GM12878 (cell line): ENCODE measurements at regions of chr10 and their contacts with region 1.

Region 1: DNA sequence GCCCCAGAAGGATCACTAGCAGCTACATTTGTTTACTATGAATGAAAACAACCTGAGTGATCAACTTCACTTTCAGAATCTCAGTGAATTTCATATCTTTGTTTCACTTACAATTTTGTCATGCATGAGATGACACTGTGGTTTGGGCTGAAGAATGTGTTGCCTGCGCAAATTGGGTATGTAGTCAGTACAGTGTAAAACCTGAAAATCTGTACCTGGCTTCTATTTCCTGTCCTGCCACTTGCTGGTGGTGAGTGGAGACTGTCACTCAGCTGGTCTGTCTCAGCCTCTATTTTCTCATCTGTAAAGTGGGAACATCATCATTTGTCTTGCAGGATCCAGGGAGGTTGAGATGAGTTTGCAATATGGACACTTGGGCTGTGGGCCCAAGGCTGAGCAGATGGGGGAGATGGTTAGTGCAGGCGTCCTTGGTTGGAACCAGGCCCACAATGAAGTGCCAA is 118.0 kb downstream of the WDFY4 start:
- DNase-seq: peak; percentile 95
- ATAC-seq: peak; percentile 94
- H3K4me3 ChIP-seq: no peak overlapping the region
- H3K27ac ChIP-seq: peak overlapping the region; percentile 43
- H3K4me1 ChIP-seq: peaks cover 50% of the 10 kb centered on the region
- H3K27me3 ChIP-seq: no peaks in the 10 kb centered on the region
- CTCF ChIP-seq: no peak; a peak in 1 of 6 replicates
- EP300 ChIP-seq: peak; percentile 77 to 92; a peak in 3 of 4 replicates
- POLR2A ChIP-seq: no peak
- RAD21 ChIP-seq: no peak

Region 2: DNA sequence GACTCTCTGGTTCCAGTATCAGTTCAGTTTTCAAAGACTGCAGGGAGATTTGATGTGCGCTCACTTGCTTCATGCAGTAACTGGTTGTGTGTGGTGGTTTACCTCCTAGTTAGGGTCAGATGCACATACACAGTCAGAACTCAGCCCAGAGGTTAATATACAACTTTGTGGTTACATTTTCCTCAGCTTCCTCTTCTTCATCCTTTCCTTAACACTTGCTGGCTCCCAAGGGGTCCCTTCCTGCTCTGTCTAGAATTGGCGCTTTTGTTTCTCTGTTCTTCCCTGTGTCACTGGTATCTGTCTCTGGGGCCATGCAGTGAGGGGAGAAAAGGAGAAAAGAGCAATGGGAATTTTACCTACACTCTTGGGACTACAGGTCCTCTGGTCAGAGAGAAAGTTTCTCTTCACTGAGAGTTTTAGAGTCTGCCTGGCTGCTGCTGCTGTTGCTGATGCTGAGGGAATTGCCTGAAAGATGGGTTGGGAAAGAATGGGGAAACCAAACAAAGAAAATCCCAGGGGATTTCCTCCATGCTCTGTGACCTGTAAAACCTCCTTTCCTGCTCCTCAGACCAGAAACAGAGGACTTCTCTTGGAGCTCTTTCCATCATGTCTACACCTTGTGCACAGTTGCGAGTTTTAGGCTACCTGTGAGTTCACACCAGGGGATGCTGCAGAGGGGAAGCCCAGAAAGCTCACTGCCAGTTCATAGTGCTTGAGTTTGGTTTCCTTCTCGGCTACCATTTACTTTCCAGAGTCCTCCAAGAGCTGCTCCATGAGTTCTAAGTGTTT is 43.3 kb before region 1 on chr10:
- CTCF ChIA-PET with region 1: interaction called, 35 read pairs
- POLR2A ChIA-PET with region 1: interaction called, 4 read pairs
- RAD21 ChIA-PET with region 1: interaction called, 12 read pairs
- SMC1A ChIA-PET with region 1: interaction called, 54 read pairs
- in situ Hi-C with region 1: no loop called
- intact Hi-C with region 1: loop called (anchors 2 kb)
- DNase-seq: peak; percentile 81
- ATAC-seq: peak; percentile 96
- H3K4me3 ChIP-seq: no peak overlapping the region
- H3K27ac ChIP-seq: peak overlapping the region; percentile 76
- H3K4me1 ChIP-seq: peaks cover 23% of the 10 kb centered on the region
- H3K27me3 ChIP-seq: no peaks in the 10 kb centered on the region
- CTCF ChIP-seq: 0 out of 6 replicates have a peak, but pooled peaks of 1 of the 3 experiments have one; percentile 2
- EP300 ChIP-seq: peak; percentile 78 to 83; a peak in 3 of 4 replicates
- POLR2A ChIP-seq: no peak
- RAD21 ChIP-seq: no peak

Region 3: GRCh38 chr10:48765039-48765438 is 37.6 kb before region 1 on chr10:
- CTCF ChIA-PET with region 1: interaction called, 35 read pairs
- POLR2A ChIA-PET with region 1: interaction called, 4 read pairs
- RAD21 ChIA-PET with region 1: interaction called, 12 read pairs
- SMC1A ChIA-PET with region 1: interaction called, 54 read pairs
- in situ Hi-C with region 1: no loop called
- intact Hi-C with region 1: loop called (anchors 2 kb)
- DNase-seq: no peak
- ATAC-seq: peak; percentile 76
- H3K4me3 ChIP-seq: no peak overlapping the region
- H3K27ac ChIP-seq: peak overlapping the region; percentile 54
- H3K4me1 ChIP-seq: peaks cover 13% of the 10 kb centered on the region
- H3K27me3 ChIP-seq: no peaks in the 10 kb centered on the region
- CTCF ChIP-seq: peak; percentile 33 to 45 (median 37); a peak in 4 of 6 replicates
- EP300 ChIP-seq: no peak
- POLR2A ChIP-seq: no peak
- RAD21 ChIP-seq: peak; percentile 23; the same call in 1 of the 2 replicates